ENCODE measurements at regions of chr2 and their contacts with region 1.

Region 1: DNA sequence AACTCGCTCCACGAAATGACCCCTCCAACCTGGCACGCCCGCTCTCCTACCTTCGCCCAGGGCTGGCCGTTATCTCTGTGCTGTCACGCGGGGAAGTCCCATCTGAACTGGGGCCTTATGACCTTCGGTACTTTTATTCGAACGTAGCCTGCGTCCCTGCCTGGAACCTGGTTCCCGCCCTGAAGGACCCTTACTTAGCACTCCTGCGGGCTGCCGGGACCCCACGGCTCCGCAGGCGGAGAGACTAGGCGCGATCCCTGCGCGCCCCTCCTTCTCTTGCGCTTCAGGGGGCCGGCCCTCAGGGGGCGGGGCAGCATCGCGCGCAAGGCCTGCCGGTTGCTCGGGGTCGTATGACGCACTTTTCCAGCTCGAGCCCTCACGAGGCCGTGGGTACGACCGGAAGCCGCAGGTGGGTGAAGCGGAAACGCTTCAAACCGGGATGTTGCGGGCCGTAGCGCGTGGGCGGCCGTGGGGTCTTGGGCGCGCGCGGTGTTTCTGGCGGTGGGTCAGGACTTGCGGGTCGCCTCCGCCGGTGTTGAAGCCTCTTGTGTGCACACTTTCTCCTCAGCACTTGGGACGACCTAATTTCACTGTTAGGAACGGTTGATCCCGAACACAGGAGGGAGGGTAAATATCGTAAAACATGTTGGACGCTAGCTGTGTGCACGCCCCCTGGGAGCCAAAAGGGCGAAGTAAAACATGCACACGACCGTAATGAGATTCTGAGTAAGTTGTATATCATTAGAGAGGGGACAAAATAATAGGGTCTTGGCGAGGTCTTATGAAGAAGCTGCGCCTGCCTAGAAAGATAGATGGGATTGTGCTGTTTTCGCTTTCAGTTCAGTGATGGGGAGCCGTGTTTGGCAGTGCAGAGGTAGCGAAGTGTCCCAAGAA is at the starts of genes LIPT1 and TSGA10:
- DNase-seq: peak; percentile 90 to 93
- ATAC-seq: peak; percentile 96 to 98
- H3K4me3 ChIP-seq: peak within 1 kb of the TSS; percentile 61 to 92 (median 86)
- H3K27ac ChIP-seq: peak within 1 kb of the TSS; percentile 86 to 99 (median 94)
- H3K4me1 ChIP-seq: peaks cover 20 to 36% of the 10 kb centered on the region in 2 donors
- H3K27me3 ChIP-seq: no peaks in the 10 kb centered on the region
- CTCF ChIP-seq: peak in 3 of 5 experiments; percentile 13 to 26 (median 13)
- POLR2A ChIP-seq: peak; percentile 89 to 93
- total RNA-seq, gene LIPT1: 4.2 to 7.5 (median 6.2) TPM
- total RNA-seq, gene TSGA10: 0.40 to 5.8 (median 1.5) TPM

Region 2: GRCh38 chr2:98608116-98608999 is 546.5 kb before region 1 on chr2 and contains the starts of genes COA5 and UNC50:
- in situ Hi-C with region 1: no loop called
- intact Hi-C with region 1: loop called (anchors 10 kb)
- DNase-seq: peak; percentile 79 to 85
- ATAC-seq: peak; percentile 90
- H3K4me3 ChIP-seq: peak within 1 kb of the TSS; percentile 70 to 90 (median 86)
- H3K27ac ChIP-seq: peak within 1 kb of the TSS; percentile 91 to 97 (median 94)
- H3K4me1 ChIP-seq: peaks cover 53 to 59% of the 10 kb centered on the region in 2 donors
- H3K27me3 ChIP-seq: no peaks in the 10 kb centered on the region
- CTCF ChIP-seq: no peak
- POLR2A ChIP-seq: peak; percentile 79 to 89
- total RNA-seq, gene COA5: 26.1 to 45.1 (median 31.0) TPM
- total RNA-seq, gene UNC50: 30.3 to 43.1 (median 30.5) TPM

Region 3: DNA sequence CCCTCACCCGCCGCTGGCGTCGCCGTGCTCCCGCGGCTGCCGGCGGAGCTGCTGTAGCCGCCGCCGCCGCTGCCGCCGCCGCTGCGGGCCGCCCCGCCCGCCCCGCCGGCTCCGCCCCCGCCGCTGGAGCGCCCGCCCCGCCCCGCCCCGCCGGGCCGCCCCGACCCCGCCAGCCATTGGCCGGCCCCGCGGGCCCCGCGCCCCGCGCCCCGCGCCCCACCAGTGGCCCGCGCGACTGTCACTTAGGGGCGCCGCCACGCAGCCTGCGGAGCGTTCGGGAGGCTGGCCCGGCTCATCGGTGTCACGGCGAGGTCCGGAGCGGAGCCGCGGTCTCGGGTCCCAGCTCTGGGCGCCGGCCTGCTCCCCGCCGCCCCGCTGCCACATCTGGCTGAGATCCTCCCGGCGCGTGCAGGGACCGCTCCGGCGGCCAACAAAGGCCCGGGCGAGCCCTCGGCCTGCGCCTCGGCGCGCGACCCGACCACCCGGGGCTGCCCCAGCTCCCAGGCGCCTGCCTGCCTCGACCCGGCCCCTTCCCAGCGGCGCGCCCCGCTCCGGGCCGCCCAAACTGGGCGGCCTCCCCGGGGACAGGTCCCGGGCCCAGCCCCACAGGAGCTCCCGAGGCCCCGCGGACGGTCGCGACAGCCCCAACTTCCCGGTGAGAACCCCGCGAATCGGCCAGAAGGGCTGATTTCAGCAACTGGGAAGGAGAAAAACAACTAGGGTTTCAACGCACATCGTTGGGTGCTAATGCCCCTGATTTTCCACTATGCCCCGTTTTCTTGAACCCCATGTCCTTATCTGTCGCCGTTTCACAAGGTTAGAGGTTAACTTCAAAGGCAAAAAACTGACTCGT is 423.6 kb before region 1 on chr2 and contains the start of gene MGAT4A:
- in situ Hi-C with region 1: no loop called
- intact Hi-C with region 1: loop called (anchors 10 kb)
- DNase-seq: peak; percentile 36 to 71
- ATAC-seq: peak; percentile 79 to 84
- H3K4me3 ChIP-seq: peak within 1 kb of the TSS; percentile 70 to 86 (median 80)
- H3K27ac ChIP-seq: peak within 1 kb of the TSS; percentile 76 to 92 (median 88)
- H3K4me1 ChIP-seq: peaks cover 18 to 23% of the 10 kb centered on the region in 2 donors
- H3K27me3 ChIP-seq: no peaks in the 10 kb centered on the region
- CTCF ChIP-seq: no peak
- POLR2A ChIP-seq: peak; percentile 74 to 79
- total RNA-seq, gene MGAT4A: 4.2 to 14.1 (median 12.2) TPM

Region 4: GRCh38 chr2:99141110-99142108 is 13.5 kb before region 1 on chr2 and contains the start of gene C2orf15:
- in situ Hi-C with region 1: no loop called
- intact Hi-C with region 1: loop called (anchors 1 kb)
- DNase-seq: peak; percentile 82 to 86
- ATAC-seq: peak; percentile 96 to 97
- H3K4me3 ChIP-seq: peak within 1 kb of the TSS; percentile 80 to 98 (median 88)
- H3K27ac ChIP-seq: peak within 1 kb of the TSS; percentile 78 to 81 (median 79)
- H3K4me1 ChIP-seq: peaks cover 4 to 11% of the 10 kb centered on the region in 2 donors
- H3K27me3 ChIP-seq: no peaks in the 10 kb centered on the region
- CTCF ChIP-seq: no peak
- POLR2A ChIP-seq: peak; percentile 10 to 73
- total RNA-seq, gene C2orf15: not detected

Region 5: DNA sequence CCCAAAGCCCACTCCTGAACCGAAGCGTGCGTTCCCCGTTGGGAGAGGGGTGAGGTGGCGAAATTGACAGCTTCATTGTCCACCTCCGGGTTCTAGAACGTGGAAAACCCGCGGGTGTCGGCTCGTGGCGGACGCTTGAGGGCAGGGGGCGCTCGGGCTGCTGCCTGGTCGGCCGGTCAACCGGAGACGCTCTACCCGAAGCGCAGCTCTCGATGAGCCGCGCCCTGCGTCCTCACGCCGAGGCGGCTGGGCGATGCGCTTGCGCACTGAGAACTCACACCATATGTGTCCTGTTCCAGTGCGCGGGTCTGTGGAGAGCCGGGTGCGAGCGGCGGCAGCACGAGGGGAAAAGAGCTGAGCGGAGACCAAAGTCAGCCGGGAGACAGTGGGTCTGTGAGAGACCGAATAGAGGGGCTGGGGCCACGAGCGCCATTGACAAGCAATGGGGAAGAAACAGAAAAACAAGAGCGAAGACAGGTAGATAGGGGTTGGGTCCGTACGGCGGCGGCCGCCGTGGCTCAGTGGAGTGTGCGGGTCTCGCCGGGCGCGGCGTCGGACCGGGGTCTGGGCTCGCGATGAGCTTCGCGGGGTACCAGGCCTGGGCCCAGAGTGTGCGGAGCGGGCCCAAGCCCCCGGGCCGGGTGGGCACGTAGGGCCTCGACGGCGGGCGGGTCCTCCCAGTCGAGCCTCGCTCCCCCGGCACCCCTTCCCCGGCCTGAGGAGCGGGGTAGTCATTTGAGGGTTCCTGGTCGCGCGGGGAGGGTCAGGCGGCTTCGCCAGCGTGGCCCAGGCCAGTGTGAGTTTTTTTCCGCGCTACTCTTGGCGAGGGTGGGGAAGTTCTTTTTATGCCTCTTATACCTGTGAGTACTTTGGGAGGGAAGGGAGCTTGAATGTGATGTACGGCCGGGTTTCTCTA is 182.5 kb after region 1 on chr2 and contains the start of gene EIF5B:
- in situ Hi-C with region 1: no loop called
- intact Hi-C with region 1: loop called (anchors 2 kb)
- DNase-seq: peak; percentile 95 to 96
- ATAC-seq: peak; percentile 77 to 81
- H3K4me3 ChIP-seq: peak within 1 kb of the TSS; percentile 87 to 98 (median 92)
- H3K27ac ChIP-seq: peak within 1 kb of the TSS; percentile 94 to 98 (median 97)
- H3K4me1 ChIP-seq: peaks cover 35 to 38% of the 10 kb centered on the region in 2 donors
- H3K27me3 ChIP-seq: no peaks in the 10 kb centered on the region
- CTCF ChIP-seq: peak in 4 of 5 experiments; percentile 38 to 69 (median 54)
- POLR2A ChIP-seq: peak; percentile 82 to 85
- total RNA-seq, gene EIF5B: 33.0 to 71.3 (median 50.7) TPM

Region 6: GRCh38 chr2:100029454-100029853 is 874.6 kb after region 1 on chr2:
- in situ Hi-C with region 1: no loop called
- intact Hi-C with region 1: no loop called
- DNase-seq: no peak
- ATAC-seq: no peak
- H3K4me3 ChIP-seq: no peak overlapping the region
- H3K27ac ChIP-seq: no peak overlapping the region
- H3K4me1 ChIP-seq: no peaks in the 10 kb centered on the region
- H3K27me3 ChIP-seq: no peaks in the 10 kb centered on the region
- CTCF ChIP-seq: no peak
- POLR2A ChIP-seq: no peak

Region 7: DNA sequence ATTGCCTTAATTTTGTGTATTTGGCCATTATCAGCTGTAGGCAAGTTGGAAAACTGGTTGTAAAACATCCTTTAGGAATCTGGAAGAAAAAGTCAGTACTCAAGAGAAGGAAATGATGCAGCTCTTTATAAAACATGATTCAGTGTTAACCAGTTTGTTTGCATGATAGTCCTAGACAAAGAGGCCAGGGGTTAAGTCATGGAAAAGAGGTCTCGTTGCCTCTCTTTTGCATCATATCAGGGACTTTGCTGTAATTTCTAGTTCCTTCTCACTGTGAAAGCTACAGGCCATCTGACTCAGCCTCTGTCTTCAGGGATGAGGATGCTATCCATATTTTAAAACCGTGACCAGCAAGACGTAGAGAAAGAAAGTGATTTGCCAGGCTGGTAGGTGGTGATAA is 1703.0 kb after region 1 on chr2:
- in situ Hi-C with region 1: no loop called
- intact Hi-C with region 1: no loop called
- DNase-seq: no peak
- ATAC-seq: no peak
- H3K4me3 ChIP-seq: no peak overlapping the region
- H3K27ac ChIP-seq: no peak overlapping the region
- H3K4me1 ChIP-seq: no peaks in the 10 kb centered on the region
- H3K27me3 ChIP-seq: no peaks in the 10 kb centered on the region
- CTCF ChIP-seq: no peak
- POLR2A ChIP-seq: no peak